AG04449 (cell line): ENCODE measurements at regions of chr11 and their contacts with region 1.

Region 1: GRCh38 chr11:59186130-59186594 is 14.2 kb downstream of the DTX4 start:
- DNase-seq: no peak
- H3K4me3 ChIP-seq: no peak overlapping the region
- CTCF ChIP-seq: peak; percentile 62

Region 2: GRCh38 chr11:59164028-59164427 is 22.1 kb before region 1 on chr11:
- CTCF ChIA-PET with region 1: interaction called, 14 read pairs
- POLR2A ChIA-PET with region 1: no interaction called
- DNase-seq: no peak
- H3K4me3 ChIP-seq: no peak overlapping the region
- CTCF ChIP-seq: no peak

Region 3: DNA sequence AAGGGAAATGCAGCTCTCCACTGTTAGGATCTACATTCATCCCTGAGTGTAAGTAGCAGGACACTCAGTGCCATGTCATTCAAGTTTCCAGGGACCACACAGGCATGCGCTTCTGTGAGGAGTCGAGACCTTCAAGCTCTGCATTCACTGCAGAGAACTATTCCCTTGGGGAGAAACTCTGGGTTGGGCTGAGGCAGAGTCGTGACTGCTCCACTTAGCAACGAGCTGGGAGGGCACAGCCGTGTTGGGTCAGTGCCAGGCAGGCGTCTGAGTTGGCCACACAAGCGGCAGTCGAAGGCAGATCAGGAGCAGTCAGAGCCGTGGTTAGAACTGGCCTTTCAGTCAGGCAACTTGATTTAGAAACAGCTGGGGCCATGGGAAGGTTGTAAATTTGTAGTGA is 11.8 kb after region 1 on chr11:
- CTCF ChIA-PET with region 1: interaction called, 450 read pairs
- POLR2A ChIA-PET with region 1: interaction called, 6 read pairs
- DNase-seq: peak; percentile 53
- H3K4me3 ChIP-seq: no peak overlapping the region
- CTCF ChIP-seq: no peak

Region 4: DNA sequence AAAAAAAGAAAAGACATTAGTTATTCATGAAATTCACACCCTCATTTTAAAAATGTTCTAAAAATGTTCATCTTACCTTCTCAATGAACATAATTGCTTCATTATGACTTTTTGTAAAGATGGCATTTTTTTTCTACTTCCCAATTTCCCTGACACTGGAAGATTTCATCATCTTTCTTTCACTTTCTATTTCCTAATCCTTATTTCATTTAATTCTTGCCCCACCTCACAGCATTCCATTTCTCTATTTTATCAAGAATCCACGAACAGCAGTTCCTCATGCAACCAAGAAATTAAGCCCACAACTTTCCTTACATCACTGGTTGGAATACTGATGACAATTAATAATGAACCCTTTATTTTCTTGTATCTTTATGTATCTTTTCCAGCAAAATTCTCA is 480.8 kb after region 1 on chr11:
- CTCF ChIA-PET with region 1: no interaction called
- POLR2A ChIA-PET with region 1: no interaction called
- DNase-seq: no peak
- H3K4me3 ChIP-seq: no peak overlapping the region; the same call in 1 of the 2 replicates
- CTCF ChIP-seq: no peak